ENCODE measurements at regions of chr4 and their contacts with region 1.

Region 1: DNA sequence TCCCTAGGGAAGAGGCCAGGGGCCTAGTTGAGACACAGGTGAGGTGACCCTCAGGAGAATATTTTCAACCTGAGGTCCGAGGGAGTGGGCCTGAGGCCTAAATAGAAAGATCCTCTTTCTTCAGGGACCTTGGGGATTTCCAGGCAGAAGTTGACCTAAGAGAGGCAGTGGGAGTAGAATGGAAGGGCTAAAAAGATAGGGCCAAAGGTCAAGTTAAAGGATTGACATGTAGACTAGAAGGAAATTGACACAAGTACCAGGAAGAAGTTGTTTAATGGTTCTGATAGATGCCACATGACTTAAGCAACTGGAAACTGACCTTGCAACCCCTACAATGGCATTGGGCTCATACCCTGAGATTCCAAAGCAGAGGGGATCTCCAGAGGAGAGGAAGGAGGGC is 76.9 kb downstream of the SHROOM3 start:
- DNase-seq: no peak
- H3K4me3 ChIP-seq: no peak overlapping the region
- CTCF ChIP-seq: no peak
- POLR2A ChIP-seq: no peak

Region 2: GRCh38 chr4:76579610-76580375 is 67.8 kb after region 1 on chr4:
- intact Hi-C with region 1: no loop called
- DNase-seq: no peak
- H3K4me3 ChIP-seq: no peak overlapping the region
- CTCF ChIP-seq: no peak
- POLR2A ChIP-seq: no peak

Region 3: DNA sequence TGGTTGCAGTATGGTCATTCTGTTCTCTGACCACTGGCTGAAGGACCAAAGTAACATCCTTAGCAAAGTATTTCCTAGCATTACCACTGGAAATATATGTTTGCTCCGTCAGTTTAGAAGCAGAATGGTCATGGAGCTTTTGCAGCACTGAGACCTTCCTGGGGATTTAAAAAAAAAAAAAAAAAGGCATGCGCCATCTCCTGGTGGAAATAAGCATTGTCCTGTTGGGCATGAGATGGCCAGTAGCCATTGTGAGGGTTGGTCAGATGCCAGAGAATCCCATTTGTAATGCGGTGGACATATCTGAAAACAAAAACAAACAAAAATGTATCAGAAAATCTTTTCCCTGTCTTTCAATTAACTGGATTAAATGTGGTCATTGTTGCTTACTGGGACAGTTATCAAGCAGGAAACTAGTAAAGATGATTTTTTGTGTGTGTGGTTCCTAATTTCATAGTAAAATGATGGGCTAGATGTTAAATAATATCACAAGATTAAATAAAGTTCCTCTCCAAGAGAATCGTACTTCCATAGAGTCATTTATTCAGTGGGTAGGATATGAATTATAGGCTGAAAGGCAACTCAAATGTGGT is 246.4 kb after region 1 on chr4:
- intact Hi-C with region 1: loop called (anchors 5 kb)
- DNase-seq: no peak
- H3K4me3 ChIP-seq: no peak overlapping the region
- CTCF ChIP-seq: no peak
- POLR2A ChIP-seq: no peak

Measured in lower leg skin (tissue), 4 donors.